Brain microvascular endothelial cell (primary cell): ENCODE measurements at regions of chr11 and their contacts with region 1.

Region 1: DNA sequence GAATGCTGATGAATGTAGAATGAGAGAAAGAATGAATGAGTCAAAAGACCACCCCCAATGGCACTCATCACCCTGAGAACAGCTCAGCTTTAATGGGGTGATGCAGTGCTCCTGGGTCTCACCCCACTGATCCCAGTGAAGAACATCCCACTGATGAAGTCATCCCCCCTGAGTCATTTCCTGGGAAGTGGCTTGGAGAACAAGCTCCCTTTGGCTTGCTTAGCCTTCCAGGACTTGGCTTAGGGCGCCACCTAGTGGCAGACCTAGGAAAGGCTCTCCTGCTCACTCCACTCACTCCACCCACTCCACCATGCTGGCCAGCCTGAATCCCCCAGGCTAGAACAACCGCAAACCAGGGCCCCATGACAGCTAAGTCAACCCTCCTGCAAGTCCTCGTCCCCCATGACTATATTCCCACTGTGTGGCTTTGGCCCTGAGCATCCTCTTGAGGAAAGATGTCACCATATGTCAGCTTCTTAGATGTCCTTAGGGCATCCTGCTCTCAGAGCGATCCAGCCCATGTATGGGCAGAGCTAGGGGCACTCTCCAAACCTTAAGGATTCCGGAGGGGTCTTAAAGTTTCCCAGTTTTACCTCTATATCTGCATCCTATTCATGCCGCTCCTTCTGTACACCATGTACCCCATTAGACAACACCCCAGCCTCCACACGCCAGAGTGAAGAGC is 17.8 kb upstream of the TMPRSS13 start:
- DNase-seq: peak; percentile 84
- H3K4me3 ChIP-seq: no peak overlapping the region
- H3K27ac ChIP-seq: no peak overlapping the region
- H3K27me3 ChIP-seq: peaks cover 7% of the 10 kb centered on the region
- CTCF ChIP-seq: peak; percentile 95

Region 2: GRCh38 chr11:117807482-117808327 is 139.3 kb before region 1 on chr11:
- in situ Hi-C with region 1: no loop called
- DNase-seq: peak; percentile 69
- H3K4me3 ChIP-seq: no peak overlapping the region
- H3K27ac ChIP-seq: no peak overlapping the region
- H3K27me3 ChIP-seq: no peaks in the 10 kb centered on the region
- CTCF ChIP-seq: peak; percentile 91

Region 3: GRCh38 chr11:117843666-117844484 is 103.1 kb before region 1 on chr11:
- in situ Hi-C with region 1: loop called (anchors 25 kb)
- DNase-seq: peak; percentile 56
- H3K4me3 ChIP-seq: no peak overlapping the region
- H3K27ac ChIP-seq: no peak overlapping the region
- H3K27me3 ChIP-seq: no peaks in the 10 kb centered on the region
- CTCF ChIP-seq: peak; percentile 99

Region 4: DNA sequence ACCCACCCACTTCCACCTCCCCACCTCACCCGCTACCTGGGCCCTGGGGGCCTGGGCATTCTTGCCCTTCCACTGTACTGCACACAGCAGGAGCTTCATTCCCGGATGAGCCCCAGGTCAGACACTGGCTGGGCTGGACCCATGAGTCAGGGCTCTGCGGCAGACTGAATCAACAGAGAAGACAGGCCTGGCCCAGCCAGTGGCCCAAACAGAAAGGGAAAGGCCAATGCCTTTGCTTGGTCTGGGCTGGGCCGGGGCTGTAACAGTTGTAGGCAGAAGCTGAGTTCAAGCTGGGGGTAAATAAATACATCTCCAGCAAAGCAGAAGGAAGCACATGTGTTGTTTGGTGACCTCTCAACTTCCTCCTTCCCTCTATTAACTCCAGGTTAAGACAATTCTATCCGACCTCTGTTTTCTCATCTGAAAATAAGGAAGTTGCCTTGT is 141.5 kb after region 1 on chr11:
- in situ Hi-C with region 1: no loop called
- DNase-seq: peak; percentile 47
- H3K4me3 ChIP-seq: no peak overlapping the region
- H3K27ac ChIP-seq: no peak overlapping the region
- H3K27me3 ChIP-seq: no peaks in the 10 kb centered on the region
- CTCF ChIP-seq: no peak

Region 5: DNA sequence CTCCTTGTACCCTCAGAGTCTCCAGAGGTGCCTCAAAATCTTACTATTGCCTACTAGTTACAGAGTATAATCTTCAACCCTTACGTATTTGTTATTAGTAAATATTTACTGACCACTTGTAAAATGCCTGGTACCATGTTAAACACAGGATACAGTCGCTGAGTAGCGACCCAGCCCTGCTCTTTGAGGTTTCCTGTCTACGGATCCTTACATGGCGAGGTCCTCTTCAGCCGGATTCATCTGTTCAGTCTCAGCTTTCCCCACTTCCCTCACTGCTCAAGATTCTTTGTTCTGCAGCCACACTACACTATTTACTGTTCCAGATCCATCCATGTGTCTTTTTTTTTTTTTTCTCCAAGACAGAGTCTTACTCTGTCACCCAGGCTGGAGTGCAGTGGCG is 567.1 kb after region 1 on chr11:
- in situ Hi-C with region 1: no loop called
- DNase-seq: no peak
- H3K4me3 ChIP-seq: no peak overlapping the region
- H3K27ac ChIP-seq: no peak overlapping the region
- H3K27me3 ChIP-seq: no peaks in the 10 kb centered on the region
- CTCF ChIP-seq: no peak